ENCODE measurements at regions of chr14 and their contacts with region 1.

Region 1: DNA sequence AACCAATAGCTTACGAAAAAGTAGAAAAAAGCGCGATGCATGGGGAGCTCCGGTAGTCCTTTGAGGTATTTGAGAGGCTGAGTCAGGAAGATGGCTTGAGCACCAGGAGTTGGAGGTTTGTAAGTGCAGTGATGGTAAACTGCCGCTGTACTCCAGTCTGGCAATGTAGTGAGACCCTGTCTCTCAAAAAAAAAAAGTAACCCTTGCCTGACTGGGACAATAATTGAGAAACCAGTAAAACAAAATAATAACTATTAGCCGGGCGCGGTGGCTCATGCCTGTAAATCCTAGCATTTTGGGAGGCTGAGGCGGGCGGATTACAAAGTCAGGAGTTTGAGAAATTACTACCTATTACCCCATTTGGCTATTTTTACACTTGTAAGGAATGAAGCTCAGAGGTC is 632 bp upstream of the ACOT2 start:
- DNase-seq: peak in 4 of 14 experiments; percentile 16 to 54 (median 42)
- ATAC-seq: no peak
- H3K4me3 ChIP-seq: peak overlapping the region; percentile 63
- H3K4me3 Mint-ChIP-seq: peak overlapping the region; percentile 97
- H3K27ac ChIP-seq: peak overlapping the region; percentile 59 to 74
- H3K27ac Mint-ChIP-seq: peak overlapping the region; percentile 98
- H3K4me1 ChIP-seq: peaks cover 51% of the 10 kb centered on the region
- H3K4me1 Mint-ChIP-seq: peaks cover 50% of the 10 kb centered on the region
- H3K27me3 ChIP-seq: no peaks in the 10 kb centered on the region
- H3K27me3 Mint-ChIP-seq: no peaks in the 10 kb centered on the region
- CTCF ChIP-seq: no peak

Region 2: DNA sequence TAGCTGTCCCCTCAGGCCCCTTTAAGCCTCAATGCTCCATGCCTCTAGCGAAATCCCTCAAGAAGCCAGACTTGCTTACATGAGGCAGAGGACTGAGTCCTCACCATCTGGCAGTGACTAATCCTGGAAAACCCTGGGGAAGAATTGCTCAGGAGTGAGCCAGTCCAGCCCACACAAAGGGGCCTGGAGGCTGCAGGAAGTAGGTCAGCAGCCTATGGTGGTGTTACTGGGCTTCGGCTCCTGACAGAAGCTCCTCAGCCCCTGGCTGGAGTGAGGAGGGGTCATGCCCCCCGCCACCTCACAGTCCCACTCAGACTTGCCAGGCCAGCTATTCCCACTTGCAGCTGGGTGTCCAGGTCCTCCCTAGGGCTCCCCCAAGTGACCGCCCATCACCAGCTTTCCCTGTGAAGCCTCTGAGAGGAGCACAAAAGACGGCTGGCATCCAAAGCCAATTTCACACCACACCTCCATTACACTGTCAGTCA is 925.0 kb before region 1 on chr14:
- CTCF ChIA-PET with region 1: no interaction called
- POLR2A ChIA-PET with region 1: no interaction called
- intact Hi-C with region 1: no loop called
- DNase-seq: no peak
- ATAC-seq: no peak
- H3K4me3 ChIP-seq: no peak overlapping the region
- H3K4me3 Mint-ChIP-seq: no peak overlapping the region
- H3K27ac ChIP-seq: no peak overlapping the region
- H3K27ac Mint-ChIP-seq: no peak overlapping the region
- H3K4me1 ChIP-seq: no peaks in the 10 kb centered on the region
- H3K4me1 Mint-ChIP-seq: no peaks in the 10 kb centered on the region
- H3K27me3 ChIP-seq: no peaks in the 10 kb centered on the region
- H3K27me3 Mint-ChIP-seq: no peaks in the 10 kb centered on the region
- CTCF ChIP-seq: no peak

Region 3: GRCh38 chr14:73503648-73504047 is 64.7 kb before region 1 on chr14:
- CTCF ChIA-PET with region 1: interaction called, 37 read pairs
- POLR2A ChIA-PET with region 1: interaction called, 28 read pairs
- intact Hi-C with region 1: loop called in 1 of 2 experiments (anchors 1 kb)
- DNase-seq: peak in 1 of 14 experiments; percentile 42
- ATAC-seq: no peak
- H3K4me3 ChIP-seq: no peak overlapping the region
- H3K4me3 Mint-ChIP-seq: no peak overlapping the region
- H3K27ac ChIP-seq: no peak overlapping the region
- H3K27ac Mint-ChIP-seq: no peak overlapping the region
- H3K4me1 ChIP-seq: no peaks in the 10 kb centered on the region
- H3K4me1 Mint-ChIP-seq: no peaks in the 10 kb centered on the region
- H3K27me3 ChIP-seq: no peaks in the 10 kb centered on the region
- H3K27me3 Mint-ChIP-seq: no peaks in the 10 kb centered on the region
- CTCF ChIP-seq: no peak

Region 4: DNA sequence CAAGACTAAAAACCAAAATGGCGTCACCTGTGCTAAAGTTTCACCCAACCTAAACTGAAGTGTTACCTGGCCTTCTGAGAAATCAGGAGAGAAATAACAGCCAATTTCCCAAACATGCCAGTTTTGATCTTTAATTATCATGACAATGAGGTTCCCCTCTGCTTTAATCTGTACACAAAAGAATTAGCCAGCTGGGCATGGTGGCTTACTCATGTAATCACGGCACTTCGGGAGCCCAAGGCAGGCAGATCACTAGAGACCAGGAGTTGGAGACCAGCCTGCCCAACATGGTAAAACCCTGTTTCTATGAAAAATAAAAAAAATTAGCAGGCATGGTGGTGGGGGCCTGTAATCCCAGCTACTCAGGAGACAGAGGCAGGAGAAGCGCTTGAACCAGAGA is 14.5 kb before region 1 on chr14:
- CTCF ChIA-PET with region 1: no interaction called
- POLR2A ChIA-PET with region 1: no interaction called
- intact Hi-C with region 1: no loop called
- DNase-seq: no peak
- ATAC-seq: no peak
- H3K4me3 ChIP-seq: no peak overlapping the region
- H3K4me3 Mint-ChIP-seq: no peak overlapping the region
- H3K27ac ChIP-seq: no peak overlapping the region
- H3K27ac Mint-ChIP-seq: no peak overlapping the region
- H3K4me1 ChIP-seq: no peaks in the 10 kb centered on the region
- H3K4me1 Mint-ChIP-seq: no peaks in the 10 kb centered on the region
- H3K27me3 ChIP-seq: no peaks in the 10 kb centered on the region
- H3K27me3 Mint-ChIP-seq: no peaks in the 10 kb centered on the region
- CTCF ChIP-seq: no peak

Region 5: GRCh38 chr14:73591690-73592448 is 23.5 kb after region 1 on chr14 and contains the start of gene ACOT4:
- CTCF ChIA-PET with region 1: interaction called, 3 read pairs
- POLR2A ChIA-PET with region 1: interaction called, 40 read pairs
- intact Hi-C with region 1: loop called in 1 of 2 experiments (anchors 2 kb)
- DNase-seq: peak in 13 of 14 experiments; percentile 35 to 88 (median 57)
- ATAC-seq: peak; percentile 89
- H3K4me3 ChIP-seq: peak within 1 kb of the TSS; percentile 88
- H3K4me3 Mint-ChIP-seq: peak within 1 kb of the TSS; percentile 82
- H3K27ac ChIP-seq: peak within 1 kb of the TSS in 1 of 2 donors; percentile 58
- H3K27ac Mint-ChIP-seq: peak within 1 kb of the TSS; percentile 71
- H3K4me1 ChIP-seq: peaks cover 11% of the 10 kb centered on the region
- H3K4me1 Mint-ChIP-seq: peaks cover 6% of the 10 kb centered on the region
- H3K27me3 ChIP-seq: no peaks in the 10 kb centered on the region
- H3K27me3 Mint-ChIP-seq: no peaks in the 10 kb centered on the region
- CTCF ChIP-seq: peak; percentile 20
- total RNA-seq, gene ACOT4: 1.0 to 1.2 TPM

Region 6: DNA sequence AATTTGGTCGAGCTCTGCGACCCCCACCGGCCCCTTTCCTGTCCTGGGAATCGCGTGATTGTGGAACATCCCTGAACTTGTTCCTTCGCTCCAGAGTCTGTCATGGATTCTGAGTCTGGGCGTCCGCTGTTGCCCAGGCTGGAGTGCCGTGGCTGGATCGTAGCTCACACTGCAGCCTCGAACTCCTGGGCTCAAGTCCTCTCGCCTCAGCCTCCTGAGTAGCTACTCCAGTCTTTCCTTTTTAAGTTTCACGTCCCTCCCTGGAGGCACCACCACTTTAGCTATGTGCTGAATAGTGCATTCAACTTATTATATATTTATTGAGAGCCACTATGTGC is 44.6 kb after region 1 on chr14:
- CTCF ChIA-PET with region 1: no interaction called
- POLR2A ChIA-PET with region 1: interaction called, 78 read pairs
- intact Hi-C with region 1: loop called (anchors 2 kb)
- DNase-seq: no peak
- ATAC-seq: no peak
- H3K4me3 ChIP-seq: peak overlapping the region; percentile 56
- H3K4me3 Mint-ChIP-seq: peak overlapping the region; percentile 91
- H3K27ac ChIP-seq: peak overlapping the region in 1 of 2 donors; percentile 16
- H3K27ac Mint-ChIP-seq: peak overlapping the region; percentile 82
- H3K4me1 ChIP-seq: peaks cover 10% of the 10 kb centered on the region
- H3K4me1 Mint-ChIP-seq: peaks cover 7% of the 10 kb centered on the region
- H3K27me3 ChIP-seq: no peaks in the 10 kb centered on the region
- H3K27me3 Mint-ChIP-seq: no peaks in the 10 kb centered on the region
- CTCF ChIP-seq: no peak

Region 7: DNA sequence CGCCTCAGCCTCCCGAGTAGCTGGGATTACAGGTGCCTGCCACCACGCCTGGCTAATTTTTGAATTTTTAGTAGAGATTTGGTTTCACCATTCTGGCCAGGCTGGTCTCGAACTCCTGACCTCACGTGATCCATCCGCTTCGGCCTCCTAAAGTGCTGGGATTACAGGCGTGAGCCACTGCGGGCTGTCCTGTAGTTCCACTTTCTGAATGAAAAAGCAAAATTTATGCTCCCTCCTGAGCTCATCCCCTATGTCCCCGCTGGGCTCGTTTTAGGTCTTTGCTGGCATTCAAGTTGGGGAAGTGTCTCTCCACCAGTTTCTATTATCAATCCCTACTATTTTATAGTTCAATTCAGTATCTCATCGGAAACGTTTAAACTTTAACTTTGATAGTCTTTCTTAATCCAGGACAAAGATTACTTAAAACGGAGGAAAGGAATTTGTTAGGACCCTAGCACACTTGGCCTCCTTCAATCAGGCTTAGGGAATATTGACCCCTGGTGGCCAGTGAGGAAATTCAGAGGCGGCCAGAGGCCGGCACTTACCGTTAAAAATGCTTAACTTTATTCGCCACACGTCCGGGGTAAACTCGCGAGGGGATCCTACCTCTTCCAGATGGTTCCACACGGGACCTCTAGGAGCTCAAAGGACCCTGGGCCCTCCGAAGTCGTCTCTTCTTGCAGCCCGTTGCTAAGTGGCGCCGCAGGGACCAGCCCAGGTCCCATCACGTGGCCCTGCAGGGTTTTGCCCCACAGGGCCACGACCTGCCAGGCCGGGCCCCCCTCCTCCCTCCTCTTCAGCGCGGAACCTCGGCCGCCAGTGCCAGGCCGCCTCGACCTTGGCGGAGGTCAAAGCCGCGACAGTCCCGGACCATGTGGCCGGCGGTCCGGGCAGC is 65.0 kb after region 1 on chr14:
- CTCF ChIA-PET with region 1: no interaction called
- POLR2A ChIA-PET with region 1: interaction called, 7 read pairs
- intact Hi-C with region 1: loop called in 1 of 2 experiments (anchors 2 kb)
- DNase-seq: peak; percentile 33 to 78 (median 48)
- ATAC-seq: peak; percentile 85
- H3K4me3 ChIP-seq: peak overlapping the region; percentile 57
- H3K4me3 Mint-ChIP-seq: peak overlapping the region; percentile 83
- H3K27ac ChIP-seq: no peak overlapping the region
- H3K27ac Mint-ChIP-seq: no peak overlapping the region
- H3K4me1 ChIP-seq: peaks cover 14% of the 10 kb centered on the region
- H3K4me1 Mint-ChIP-seq: peaks cover 5% of the 10 kb centered on the region
- H3K27me3 ChIP-seq: peaks cover 0 to 10% of the 10 kb centered on the region in 2 experiments
- H3K27me3 Mint-ChIP-seq: peaks cover 10% of the 10 kb centered on the region
- CTCF ChIP-seq: peak; percentile 80

Region 8: GRCh38 chr14:73713803-73714655 is 145.6 kb after region 1 on chr14 and contains the start of gene PNMA1:
- CTCF ChIA-PET with region 1: no interaction called
- POLR2A ChIA-PET with region 1: interaction called, 12 read pairs
- intact Hi-C with region 1: no loop called
- DNase-seq: peak; percentile 75 to 95 (median 82)
- ATAC-seq: peak; percentile 68
- H3K4me3 ChIP-seq: peak within 1 kb of the TSS; percentile 87
- H3K4me3 Mint-ChIP-seq: peak within 1 kb of the TSS; percentile 96
- H3K27ac ChIP-seq: peak within 1 kb of the TSS; percentile 73 to 77
- H3K27ac Mint-ChIP-seq: peak within 1 kb of the TSS; percentile 92
- H3K4me1 ChIP-seq: peaks cover 33% of the 10 kb centered on the region
- H3K4me1 Mint-ChIP-seq: peaks cover 33% of the 10 kb centered on the region
- H3K27me3 ChIP-seq: no peaks in the 10 kb centered on the region
- H3K27me3 Mint-ChIP-seq: no peaks in the 10 kb centered on the region
- CTCF ChIP-seq: no peak
- total RNA-seq, gene PNMA1: 52.6 to 55.9 TPM

Region 9: DNA sequence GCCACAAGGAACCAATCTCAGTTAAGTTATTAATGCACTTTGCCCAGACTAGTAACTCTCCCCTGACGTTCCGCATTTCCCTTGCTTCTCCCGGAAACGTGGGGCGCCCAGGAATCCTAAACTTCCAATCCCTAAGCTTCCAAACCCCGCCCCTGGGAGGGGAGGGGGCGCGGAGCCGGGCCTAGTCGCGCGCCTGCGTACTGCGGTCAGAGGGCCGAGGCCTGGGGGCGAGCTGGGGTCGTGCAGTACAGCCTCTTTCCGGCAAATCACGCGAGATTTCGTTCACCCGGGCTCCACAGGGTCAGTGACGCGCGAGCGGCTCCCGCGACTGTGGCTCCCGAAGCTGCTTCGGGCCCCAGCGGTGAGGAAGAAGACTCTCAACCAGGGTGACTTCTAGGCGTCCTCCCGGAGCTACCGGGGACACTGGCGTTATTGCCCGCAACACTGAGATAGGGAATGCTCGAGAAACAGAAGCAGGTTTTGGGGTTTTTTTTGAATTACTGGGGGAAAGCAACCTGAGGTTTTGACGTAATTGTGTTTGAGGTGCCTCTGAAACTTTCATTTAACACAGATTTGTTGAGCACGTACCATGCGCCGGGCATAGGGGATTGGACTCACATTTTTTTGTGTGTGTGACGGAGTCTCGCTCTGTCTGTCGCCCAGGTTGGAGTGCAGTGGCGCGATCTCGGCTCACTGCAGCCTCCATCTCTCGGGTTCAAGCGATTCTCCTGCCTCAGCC is 283.4 kb after region 1 on chr14 and contains the start of gene PTGR2:
- CTCF ChIA-PET with region 1: no interaction called
- POLR2A ChIA-PET with region 1: interaction called, 12 read pairs
- intact Hi-C with region 1: no loop called
- DNase-seq: peak; percentile 77 to 97 (median 85)
- ATAC-seq: peak; percentile 93
- H3K4me3 ChIP-seq: peak within 1 kb of the TSS; percentile 63
- H3K4me3 Mint-ChIP-seq: peak within 1 kb of the TSS; percentile 91
- H3K27ac ChIP-seq: peak within 1 kb of the TSS; percentile 54 to 72
- H3K27ac Mint-ChIP-seq: peak within 1 kb of the TSS; percentile 94
- H3K4me1 ChIP-seq: peaks cover 17% of the 10 kb centered on the region
- H3K4me1 Mint-ChIP-seq: peaks cover 24% of the 10 kb centered on the region
- H3K27me3 ChIP-seq: no peaks in the 10 kb centered on the region
- H3K27me3 Mint-ChIP-seq: no peaks in the 10 kb centered on the region
- CTCF ChIP-seq: no peak
- total RNA-seq, gene PTGR2: 0.70 to 1.1 TPM

Region 10: DNA sequence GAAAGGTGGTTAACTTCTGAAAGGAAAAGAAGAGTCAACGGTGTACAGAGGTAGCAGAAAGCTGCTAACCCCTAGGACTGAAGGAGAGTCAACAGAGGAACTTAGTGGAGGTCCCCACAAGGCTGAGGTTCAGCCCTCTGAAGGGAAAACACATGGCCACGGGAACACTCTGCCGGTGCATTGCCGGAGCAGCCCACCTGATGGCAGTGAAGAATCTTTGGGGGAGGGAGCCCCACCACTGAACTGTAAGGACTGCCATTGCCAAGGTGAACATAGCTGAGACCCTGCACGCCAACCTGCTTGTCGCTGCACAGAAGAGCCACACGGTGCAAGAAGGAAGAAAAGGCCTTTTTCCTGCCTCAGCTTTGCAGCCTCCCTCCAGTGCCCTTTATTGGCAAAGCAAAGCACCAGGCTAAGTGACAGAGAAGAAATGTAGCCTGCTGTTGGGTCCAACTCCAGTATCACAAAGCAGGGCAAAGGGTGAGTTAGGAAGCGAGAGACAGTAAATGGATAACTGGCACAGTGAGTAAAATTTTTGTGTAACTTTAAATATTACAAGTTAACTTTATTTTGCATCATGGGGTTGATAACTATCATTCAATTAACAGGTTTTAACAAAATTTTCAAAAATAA is 593.3 kb after region 1 on chr14:
- CTCF ChIA-PET with region 1: no interaction called
- POLR2A ChIA-PET with region 1: no interaction called
- intact Hi-C with region 1: no loop called
- DNase-seq: no peak
- ATAC-seq: no peak
- H3K4me3 ChIP-seq: no peak overlapping the region
- H3K4me3 Mint-ChIP-seq: no peak overlapping the region
- H3K27ac ChIP-seq: no peak overlapping the region
- H3K27ac Mint-ChIP-seq: no peak overlapping the region
- H3K4me1 ChIP-seq: no peaks in the 10 kb centered on the region
- H3K4me1 Mint-ChIP-seq: no peaks in the 10 kb centered on the region
- H3K27me3 ChIP-seq: no peaks in the 10 kb centered on the region
- H3K27me3 Mint-ChIP-seq: no peaks in the 10 kb centered on the region
- CTCF ChIP-seq: no peak